K562 (cell line): ENCODE measurements at regions of chr11 and their contacts with region 1.

Region 1: GRCh38 chr11:36023922-36024321 is 80.1 kb downstream of the LDLRAD3 start:
- DNase-seq: no peak
- ATAC-seq: no peak
- H3K4me3 ChIP-seq: no peak overlapping the region
- H3K27ac ChIP-seq: no peak overlapping the region
- H3K4me1 ChIP-seq: peaks cover 0 to 7% of the 10 kb centered on the region in 2 experiments; a peak in 2 of 5 replicates
- H3K27me3 ChIP-seq: peaks cover 5 to 23% of the 10 kb centered on the region in 2 experiments; a peak in 4 of 5 replicates
- CTCF ChIP-seq: no peak
- EP300 ChIP-seq: no peak
- POLR2A ChIP-seq: no peak
- RAD21 ChIP-seq: no peak

Region 2: DNA sequence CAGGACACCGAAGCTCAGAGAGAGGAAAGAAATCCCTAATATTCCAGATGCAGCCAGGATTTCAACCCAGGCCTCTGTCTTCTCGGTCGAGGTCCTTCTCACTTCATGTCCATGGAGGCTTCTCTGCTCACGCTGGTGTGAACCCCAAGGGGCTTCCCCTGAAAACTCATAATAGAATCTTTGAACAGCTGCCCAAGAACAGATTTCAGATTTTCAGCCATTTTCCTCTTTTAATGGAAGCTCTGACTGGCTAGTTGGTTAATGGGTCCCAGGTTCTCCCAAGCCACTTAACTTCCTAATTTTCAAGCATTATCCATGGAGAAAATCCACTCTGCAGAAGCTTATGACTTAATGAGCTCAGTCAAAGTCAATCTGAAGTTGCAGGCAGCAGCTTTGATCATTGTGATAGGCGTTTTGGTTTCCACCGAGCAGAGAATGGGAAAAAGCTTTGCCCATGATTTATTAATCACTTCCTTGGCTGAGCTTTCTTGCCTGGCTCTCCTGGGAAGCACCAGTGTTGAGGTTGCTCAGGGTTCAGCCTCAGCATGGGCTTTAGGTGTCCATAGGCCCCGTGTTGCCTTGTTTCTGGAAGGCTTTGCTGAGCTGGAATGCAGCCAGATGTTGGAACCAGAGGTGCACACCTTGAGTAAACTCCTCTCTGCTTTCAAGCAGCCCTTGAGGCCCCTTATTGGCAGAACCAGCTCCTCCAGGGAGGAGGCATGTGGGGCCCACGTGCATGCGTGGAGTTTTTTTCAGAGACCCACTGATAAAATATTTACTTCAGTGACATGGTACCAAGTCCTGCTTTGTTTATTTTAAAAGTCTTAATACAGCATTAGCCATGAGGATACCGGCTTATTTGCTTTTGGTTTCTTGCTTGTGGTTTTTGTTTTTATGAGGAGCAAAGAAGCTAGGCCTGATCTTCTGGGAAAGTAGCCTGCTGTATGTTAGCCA is 54.6 kb before region 1 on chr11:
- CTCF ChIA-PET with region 1: no interaction called
- POLR2A ChIA-PET with region 1: no interaction called
- in situ Hi-C with region 1: no loop called
- intact Hi-C with region 1: loop called (anchors 10 kb)
- DNase-seq: no peak
- ATAC-seq: no peak
- H3K4me3 ChIP-seq: no peak overlapping the region
- H3K27ac ChIP-seq: no peak overlapping the region
- H3K4me1 ChIP-seq: no peaks in the 10 kb centered on the region
- H3K27me3 ChIP-seq: no peaks in the 10 kb centered on the region
- CTCF ChIP-seq: no peak
- EP300 ChIP-seq: no peak
- POLR2A ChIP-seq: no peak
- RAD21 ChIP-seq: no peak